Transverse colon (tissue), 4 donors: ENCODE measurements at regions of chr6 and their contacts with region 1.

Region 1: GRCh38 chr6:31419842-31420241 is 16.4 kb downstream of the MICA start:
- DNase-seq: no peak
- H3K4me3 ChIP-seq: no peak overlapping the region
- H3K27ac ChIP-seq: no peak overlapping the region
- H3K4me1 ChIP-seq: no peaks in the 10 kb centered on the region
- H3K27me3 ChIP-seq: no peaks in the 10 kb centered on the region
- CTCF ChIP-seq: no peak
- EP300 ChIP-seq: no peak
- POLR2A ChIP-seq: no peak

Region 2: GRCh38 chr6:31513456-31514165 is 93.8 kb after region 1 on chr6:
- in situ Hi-C with region 1: loop called in 1 of 4 experiments (anchors 10 kb)
- intact Hi-C with region 1: no loop called
- DNase-seq: no peak
- H3K4me3 ChIP-seq: no peak overlapping the region
- H3K27ac ChIP-seq: no peak overlapping the region
- H3K4me1 ChIP-seq: no peaks in the 10 kb centered on the region
- H3K27me3 ChIP-seq: no peaks in the 10 kb centered on the region
- CTCF ChIP-seq: no peak
- EP300 ChIP-seq: no peak
- POLR2A ChIP-seq: no peak

Region 3: GRCh38 chr6:31665501-31666336 is 245.9 kb after region 1 on chr6 and contains the start of gene CSNK2B:
- in situ Hi-C with region 1: no loop called
- intact Hi-C with region 1: no loop called
- DNase-seq: peak; percentile 99
- H3K4me3 ChIP-seq: peak within 1 kb of the TSS; percentile 76 to 96 (median 92)
- H3K27ac ChIP-seq: peak within 1 kb of the TSS; percentile 93 to 99 (median 98)
- H3K4me1 ChIP-seq: peaks cover 23 to 55% (median 30%) of the 10 kb centered on the region in 4 donors
- H3K27me3 ChIP-seq: no peaks in the 10 kb centered on the region
- CTCF ChIP-seq: no peak
- EP300 ChIP-seq: no peak
- POLR2A ChIP-seq: peak; percentile 94
- total RNA-seq, gene CSNK2B: 182 to 231 (median 210) TPM